ENCODE measurements at regions of chr17 and their contacts with region 1.

Region 1: GRCh38 chr17:19517699-19518098 is 16.0 kb upstream of the SLC47A1 start:
- DNase-seq: no peak
- H3K4me3 ChIP-seq: no peak overlapping the region
- CTCF ChIP-seq: no peak

Region 2: GRCh38 chr17:19590912-19591551 is 73.3 kb after region 1 on chr17:
- in situ Hi-C with region 1: loop called (anchors 5 kb)
- DNase-seq: no peak
- H3K4me3 ChIP-seq: no peak overlapping the region
- CTCF ChIP-seq: no peak

Region 3: DNA sequence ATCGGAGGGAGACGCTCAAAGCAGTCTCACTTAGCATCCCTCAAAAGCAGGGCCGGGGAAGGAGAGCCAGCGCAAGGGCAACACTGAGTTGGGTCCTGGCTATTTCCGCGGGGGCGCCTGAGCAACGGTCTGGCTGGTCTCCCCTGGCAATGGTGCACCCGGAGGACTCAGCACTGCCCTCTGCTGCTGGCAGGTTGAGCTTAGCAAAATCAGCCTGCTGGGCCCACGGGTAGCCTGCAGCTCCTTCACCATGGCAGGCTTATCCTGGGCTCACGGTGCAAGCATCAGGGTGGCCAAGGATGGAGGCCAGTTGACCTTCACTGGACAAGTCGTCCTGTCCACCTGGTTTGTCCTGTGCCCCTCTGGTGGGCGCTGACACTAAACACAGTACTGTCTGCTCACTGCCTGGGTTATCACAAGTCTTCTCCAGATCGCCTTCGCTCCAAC is 244.8 kb after region 1 on chr17:
- in situ Hi-C with region 1: loop called (anchors 5 kb)
- DNase-seq: no peak
- H3K4me3 ChIP-seq: no peak overlapping the region
- CTCF ChIP-seq: peak; percentile 69

Measured in astrocyte of the cerebellum (primary cell).